ENCODE measurements at regions of chr22 and their contacts with region 1.

Region 1: GRCh38 chr22:31977141-31977841 is 33.0 kb downstream of the YWHAH start:
- H3K4me3 Mint-ChIP-seq: no peak overlapping the region
- H3K27ac Mint-ChIP-seq: no peak overlapping the region
- H3K4me1 Mint-ChIP-seq: no peaks in the 10 kb centered on the region
- H3K27me3 Mint-ChIP-seq: peaks cover 14% of the 10 kb centered on the region

Region 2: GRCh38 chr22:31917227-31917921 is 59.9 kb before region 1 on chr22:
- intact Hi-C with region 1: no loop called
- H3K4me3 Mint-ChIP-seq: peak overlapping the region; percentile 42
- H3K27ac Mint-ChIP-seq: peak overlapping the region; percentile 76
- H3K4me1 Mint-ChIP-seq: peaks cover 67% of the 10 kb centered on the region
- H3K27me3 Mint-ChIP-seq: no peaks in the 10 kb centered on the region

Region 3: DNA sequence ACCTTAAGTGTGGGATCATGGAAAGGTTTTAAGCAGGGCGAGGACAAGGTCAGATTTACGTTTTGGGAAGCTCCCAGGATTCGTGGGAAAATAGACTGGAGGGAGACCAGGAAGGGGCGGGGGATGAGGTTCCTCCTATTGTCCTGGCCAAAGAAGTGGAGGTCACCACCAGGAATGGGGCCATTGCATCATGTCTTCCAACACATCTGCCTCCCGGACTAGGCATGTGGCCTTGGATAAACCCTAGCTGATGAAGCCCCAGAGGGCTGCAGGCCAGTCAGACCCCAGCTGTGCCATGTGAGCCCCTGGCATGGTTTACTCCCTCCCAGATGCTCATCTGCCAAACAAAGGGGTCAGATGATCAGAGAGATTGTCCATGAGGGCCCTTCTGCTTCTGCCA is 44.4 kb before region 1 on chr22:
- intact Hi-C with region 1: no loop called
- H3K4me3 Mint-ChIP-seq: no peak overlapping the region
- H3K27ac Mint-ChIP-seq: peak overlapping the region; percentile 53
- H3K4me1 Mint-ChIP-seq: peaks cover 62% of the 10 kb centered on the region
- H3K27me3 Mint-ChIP-seq: peaks cover 11% of the 10 kb centered on the region

Region 4: GRCh38 chr22:31943976-31944699 is 33.2 kb before region 1 on chr22 and contains the start of gene YWHAH:
- intact Hi-C with region 1: no loop called
- H3K4me3 Mint-ChIP-seq: no peak within 1 kb of the TSS
- H3K27ac Mint-ChIP-seq: no peak within 1 kb of the TSS
- H3K4me1 Mint-ChIP-seq: peaks cover 39% of the 10 kb centered on the region
- H3K27me3 Mint-ChIP-seq: no peaks in the 10 kb centered on the region

Region 5: GRCh38 chr22:32018056-32018455 is 40.8 kb after region 1 on chr22:
- intact Hi-C with region 1: no loop called
- H3K4me3 Mint-ChIP-seq: no peak overlapping the region
- H3K27ac Mint-ChIP-seq: no peak overlapping the region
- H3K4me1 Mint-ChIP-seq: no peaks in the 10 kb centered on the region
- H3K27me3 Mint-ChIP-seq: peaks cover 2% of the 10 kb centered on the region

Region 6: GRCh38 chr22:32080904-32081303 is 103.6 kb after region 1 on chr22:
- intact Hi-C with region 1: loop called (anchors 1 kb)
- H3K4me3 Mint-ChIP-seq: no peak overlapping the region
- H3K27ac Mint-ChIP-seq: no peak overlapping the region
- H3K4me1 Mint-ChIP-seq: peaks cover 5% of the 10 kb centered on the region
- H3K27me3 Mint-ChIP-seq: peaks cover 10% of the 10 kb centered on the region